AG04450 (cell line): ENCODE measurements at regions of chr12 and their contacts with region 1.

Region 1: GRCh38 chr12:49130151-49131050 is 794 bp downstream of the TUBA1B start:
- DNase-seq: peak; percentile 86
- H3K4me3 ChIP-seq: peak overlapping the region; percentile 90
- H3K27ac ChIP-seq: peak overlapping the region; percentile 98
- H3K27me3 ChIP-seq: no peaks in the 10 kb centered on the region
- CTCF ChIP-seq: peak; percentile 91

Region 2: GRCh38 chr12:49088190-49088931 is 42.0 kb before region 1 on chr12:
- CTCF ChIA-PET with region 1: interaction called, 34 read pairs
- POLR2A ChIA-PET with region 1: interaction called, 19 read pairs
- DNase-seq: peak; percentile 88
- H3K4me3 ChIP-seq: 0 out of 2 replicates have a peak overlapping the region, but pooled peaks have one; percentile 29
- H3K27ac ChIP-seq: no peak overlapping the region
- H3K27me3 ChIP-seq: peaks cover 15% of the 10 kb centered on the region
- CTCF ChIP-seq: peak; percentile 89

Region 3: DNA sequence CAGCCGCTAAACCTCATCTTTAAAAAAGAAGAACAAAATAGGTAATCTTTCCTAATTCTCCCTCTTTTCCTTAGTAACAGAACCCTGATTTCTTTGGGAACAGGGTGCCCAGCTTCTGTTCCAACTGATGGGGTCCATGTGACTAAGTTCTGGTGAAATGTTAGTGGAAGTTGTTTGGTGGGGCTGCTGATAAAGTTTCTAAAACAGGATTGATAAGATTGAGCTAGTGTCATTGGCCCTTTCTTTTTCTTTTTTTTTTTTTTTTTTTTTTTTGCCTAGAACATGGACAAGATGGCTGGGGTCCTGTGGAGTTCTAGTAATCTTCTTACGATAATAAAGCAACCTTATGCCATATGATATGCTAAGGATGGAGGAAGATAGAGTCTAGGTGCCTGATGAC is 17.0 kb after region 1 on chr12:
- CTCF ChIA-PET with region 1: interaction called, 8 read pairs
- POLR2A ChIA-PET with region 1: interaction called, 12 read pairs
- DNase-seq: no peak
- H3K4me3 ChIP-seq: no peak overlapping the region
- H3K27ac ChIP-seq: no peak overlapping the region
- H3K27me3 ChIP-seq: no peaks in the 10 kb centered on the region
- CTCF ChIP-seq: no peak

Region 4: DNA sequence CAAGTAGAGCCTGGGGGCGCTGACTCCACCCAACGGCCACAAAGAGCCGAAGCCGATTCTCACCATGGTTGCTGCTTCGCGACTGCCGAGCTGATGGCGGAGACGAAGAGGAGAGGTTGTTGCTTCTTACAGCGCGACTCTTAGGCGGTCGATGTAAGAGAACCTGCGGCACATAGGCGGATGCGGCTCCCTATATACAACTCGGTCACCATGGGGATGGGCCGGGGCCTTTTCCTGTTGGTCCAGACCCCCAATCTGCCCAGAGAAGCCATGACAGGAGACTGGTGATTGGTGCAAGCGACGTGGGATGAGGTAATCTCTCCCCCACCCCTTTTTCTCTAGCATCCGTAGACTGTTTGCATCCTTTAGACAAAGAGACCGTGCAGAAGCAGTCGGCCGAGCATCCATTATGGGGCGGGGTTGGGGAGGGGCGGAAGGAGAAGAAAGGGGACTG is 58.5 kb after region 1 on chr12 and contains the start of gene TUBA1A:
- CTCF ChIA-PET with region 1: interaction called, 8 read pairs
- POLR2A ChIA-PET with region 1: interaction called, 65 read pairs
- DNase-seq: peak; percentile 99
- H3K4me3 ChIP-seq: peak within 1 kb of the TSS; percentile 94
- H3K27ac ChIP-seq: peak within 1 kb of the TSS; percentile 94
- H3K27me3 ChIP-seq: no peaks in the 10 kb centered on the region
- CTCF ChIP-seq: no peak
- polyA plus RNA-seq, gene TUBA1A: 1,918 and 2,457 TPM in 2 replicates

Region 5: DNA sequence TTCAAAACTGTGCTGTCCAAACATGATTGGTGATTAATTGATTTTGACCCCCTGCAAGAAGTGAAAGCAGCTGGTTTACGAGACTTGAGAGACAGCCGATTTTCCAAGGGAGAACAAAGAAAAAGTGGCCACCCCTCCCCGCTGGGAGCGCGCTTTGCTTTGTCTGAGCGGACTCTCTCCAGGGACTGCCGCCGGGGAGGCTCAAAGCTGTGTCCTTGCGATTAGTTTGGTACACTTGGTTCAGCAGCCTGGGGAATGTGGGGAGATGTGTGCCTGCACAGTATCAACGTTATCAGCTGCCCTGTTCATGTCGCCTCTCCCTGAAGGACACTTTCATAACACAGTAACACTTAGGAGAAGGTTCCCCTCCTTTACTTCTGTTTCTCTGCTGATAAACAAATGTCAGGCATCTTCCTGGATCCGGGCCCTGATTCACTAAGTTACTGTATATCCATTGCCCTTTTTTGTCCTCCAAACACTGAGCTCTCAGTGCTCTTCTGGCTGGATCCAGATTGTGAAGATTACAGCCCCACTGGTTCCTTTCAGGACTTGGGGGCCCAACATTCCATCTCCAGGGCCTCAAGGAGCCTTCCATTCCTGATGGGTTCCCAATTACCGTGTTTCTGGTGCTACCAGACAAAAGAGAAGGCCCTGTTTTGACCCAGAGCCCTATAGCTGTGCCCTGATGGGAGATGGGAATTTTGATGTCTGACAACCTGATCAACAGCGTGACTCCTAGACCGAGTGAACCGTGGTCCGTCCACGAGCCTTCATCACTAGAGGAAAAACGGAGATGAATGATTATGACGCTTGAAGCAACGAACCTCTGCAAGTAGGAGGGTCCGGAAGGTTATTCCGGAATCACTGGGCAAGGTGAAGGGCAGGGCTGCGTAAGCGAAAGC is 102.8 kb after region 1 on chr12:
- CTCF ChIA-PET with region 1: interaction called, 18 read pairs
- POLR2A ChIA-PET with region 1: interaction called, 53 read pairs
- DNase-seq: no peak
- H3K4me3 ChIP-seq: peak overlapping the region; percentile 46
- H3K27ac ChIP-seq: peak overlapping the region; percentile 82
- H3K27me3 ChIP-seq: no peaks in the 10 kb centered on the region
- CTCF ChIP-seq: peak; percentile 40

Region 6: GRCh38 chr12:49264738-49265515 is 134.5 kb after region 1 on chr12 and contains the start of gene TUBA1C:
- CTCF ChIA-PET with region 1: no interaction called
- POLR2A ChIA-PET with region 1: interaction called, 17 read pairs
- DNase-seq: peak; percentile 70
- H3K4me3 ChIP-seq: peak within 1 kb of the TSS; percentile 86
- H3K27ac ChIP-seq: peak within 1 kb of the TSS; percentile 98
- H3K27me3 ChIP-seq: no peaks in the 10 kb centered on the region
- CTCF ChIP-seq: 0 out of 2 replicates have a peak, but pooled peaks have one; percentile 1
- polyA plus RNA-seq, gene TUBA1C: 947 and 1,207 TPM in 2 replicates

Region 7: DNA sequence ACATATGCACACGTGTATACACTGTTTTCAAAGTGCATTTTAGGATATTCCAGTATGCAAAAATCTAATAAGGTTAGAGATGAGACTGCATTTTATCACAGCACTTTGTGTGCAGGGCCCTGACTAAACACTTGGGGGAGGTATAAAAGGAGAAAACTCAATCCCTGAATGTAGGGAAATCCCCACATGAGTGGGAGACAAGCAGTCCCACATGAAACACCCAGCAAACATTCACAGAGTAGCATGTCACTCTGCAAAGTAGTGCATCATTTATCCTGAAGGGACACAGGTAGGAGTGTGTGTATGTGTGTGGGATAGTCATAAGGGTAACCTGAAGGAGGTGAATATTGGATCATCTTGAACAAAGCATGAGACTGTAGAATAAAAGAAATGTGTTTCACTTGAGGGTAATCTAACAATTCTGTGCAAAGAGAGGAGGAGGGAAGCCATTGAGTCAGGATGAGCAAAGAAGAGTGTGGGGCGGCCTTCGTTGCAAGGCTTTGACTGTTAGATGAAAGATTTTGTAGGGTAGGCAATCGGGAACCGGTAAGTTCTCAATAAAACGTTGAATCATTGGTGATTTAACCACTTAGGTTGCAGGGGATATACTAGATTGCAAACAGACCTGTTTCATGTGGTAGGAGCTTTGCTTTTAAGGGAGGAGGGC is 495.9 kb after region 1 on chr12:
- CTCF ChIA-PET with region 1: no interaction called
- POLR2A ChIA-PET with region 1: no interaction called
- DNase-seq: no peak
- H3K4me3 ChIP-seq: no peak overlapping the region
- H3K27ac ChIP-seq: no peak overlapping the region
- H3K27me3 ChIP-seq: no peaks in the 10 kb centered on the region
- CTCF ChIP-seq: peak; percentile 42